B cell (primary cell): ENCODE measurements at regions of chr1 and their contacts with region 1.

Region 1: DNA sequence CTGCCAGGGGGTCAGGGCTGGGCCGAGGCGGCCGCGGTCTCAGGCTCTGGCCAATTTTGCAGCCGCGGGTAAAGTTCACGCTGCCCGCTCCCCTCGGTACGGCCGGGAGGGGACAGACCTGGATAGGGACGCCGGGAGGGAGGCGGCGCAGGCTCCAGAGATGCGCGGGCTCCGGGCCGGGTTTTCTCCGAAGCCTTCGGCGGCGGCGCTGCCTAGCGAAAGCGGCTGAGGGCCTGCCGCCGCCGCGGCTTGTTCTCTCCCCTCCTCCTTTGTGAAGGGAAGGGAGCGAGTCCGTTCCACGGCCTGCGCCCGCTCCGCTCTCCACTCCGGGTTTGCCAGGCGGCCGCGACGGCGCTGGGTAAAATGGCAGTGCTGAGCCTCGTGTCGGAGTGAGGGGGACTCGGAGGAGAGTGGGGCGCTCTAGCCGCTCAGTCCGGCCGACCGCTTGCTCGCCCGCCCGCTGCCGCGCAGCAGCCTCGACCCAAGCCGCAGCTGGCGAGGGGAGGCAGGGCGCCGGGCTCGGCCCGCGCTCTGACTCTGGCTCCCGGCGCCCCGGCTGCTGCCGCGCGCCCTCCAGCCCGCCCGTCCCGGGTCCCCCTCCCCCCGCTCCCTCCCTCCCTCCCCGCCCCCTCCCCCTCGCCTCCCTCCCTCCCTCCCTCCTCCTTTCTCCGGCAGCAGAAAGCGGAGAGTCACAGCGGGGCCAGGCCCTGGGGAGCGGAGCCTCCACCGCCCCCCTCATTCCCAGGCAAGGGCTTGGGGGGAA is at the start of gene ARID1A:
- DNase-seq: peak; percentile 99
- ATAC-seq: peak; percentile 62
- H3K4me3 ChIP-seq: peak within 1 kb of the TSS; percentile 22 to 84 (median 73)
- H3K4me3 Mint-ChIP-seq: peak within 1 kb of the TSS; percentile 91
- H3K27ac ChIP-seq: peak within 1 kb of the TSS; percentile 67 to 93
- H3K27ac Mint-ChIP-seq: peak within 1 kb of the TSS; percentile 93
- H3K4me1 ChIP-seq: peaks cover 46 to 48% of the 10 kb centered on the region in 2 donors
- H3K4me1 Mint-ChIP-seq: peaks cover 30% of the 10 kb centered on the region
- H3K27me3 ChIP-seq: no peaks in the 10 kb centered on the region
- H3K27me3 Mint-ChIP-seq: no peaks in the 10 kb centered on the region
- CTCF ChIP-seq: no peak
- total RNA-seq, gene ARID1A: 150 and 152 TPM in 2 replicates

Region 2: DNA sequence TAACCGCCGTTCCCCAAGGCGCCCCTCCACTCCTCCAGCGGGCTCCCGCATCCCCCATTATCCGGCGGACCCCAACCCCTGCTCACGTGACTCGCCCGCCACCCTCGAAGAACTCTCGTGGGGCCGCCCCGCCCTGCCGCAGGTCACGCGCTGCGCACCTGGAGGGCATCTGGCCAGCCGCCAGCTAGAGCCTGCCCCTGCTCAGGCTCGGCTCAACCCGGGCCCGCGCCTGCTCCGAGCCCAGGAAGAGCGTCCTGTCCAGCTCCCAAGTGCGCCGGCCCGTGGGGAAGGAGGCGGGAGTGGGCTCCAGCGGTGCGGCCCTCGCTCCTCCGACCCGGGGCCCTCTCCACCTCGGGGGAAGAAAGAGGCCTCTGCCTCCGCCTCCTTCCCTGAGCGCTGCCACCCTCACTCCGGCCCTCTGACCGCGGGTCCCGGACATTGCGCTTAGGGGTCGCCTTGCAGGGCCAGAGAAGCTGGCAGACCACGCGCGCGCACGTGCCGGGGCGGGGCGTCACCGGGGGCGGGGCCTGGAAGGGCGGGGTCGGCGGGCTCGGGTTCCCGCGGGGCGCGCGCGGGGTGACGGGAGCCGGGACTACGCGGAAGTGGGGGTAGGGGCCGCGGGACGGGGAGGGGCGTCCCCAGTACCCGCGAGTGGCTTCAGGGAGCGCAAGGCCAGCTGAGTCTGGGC is 194.9 kb before region 1 on chr1:
- CTCF ChIA-PET with region 1: no interaction called
- POLR2A ChIA-PET with region 1: interaction called, 10 read pairs
- intact Hi-C with region 1: loop called (anchors 10 kb)
- DNase-seq: peak; percentile 96
- ATAC-seq: peak; percentile 75
- H3K4me3 ChIP-seq: peak overlapping the region in 4 of 5 experiments; percentile 74 to 93 (median 88)
- H3K4me3 Mint-ChIP-seq: peak overlapping the region; percentile 91
- H3K27ac ChIP-seq: peak overlapping the region; percentile 100
- H3K27ac Mint-ChIP-seq: peak overlapping the region; percentile 98
- H3K4me1 ChIP-seq: peaks cover 7 to 19% of the 10 kb centered on the region in 2 donors
- H3K4me1 Mint-ChIP-seq: peaks cover 8% of the 10 kb centered on the region
- H3K27me3 ChIP-seq: no peaks in the 10 kb centered on the region
- H3K27me3 Mint-ChIP-seq: no peaks in the 10 kb centered on the region
- CTCF ChIP-seq: peak; percentile 44

Region 3: DNA sequence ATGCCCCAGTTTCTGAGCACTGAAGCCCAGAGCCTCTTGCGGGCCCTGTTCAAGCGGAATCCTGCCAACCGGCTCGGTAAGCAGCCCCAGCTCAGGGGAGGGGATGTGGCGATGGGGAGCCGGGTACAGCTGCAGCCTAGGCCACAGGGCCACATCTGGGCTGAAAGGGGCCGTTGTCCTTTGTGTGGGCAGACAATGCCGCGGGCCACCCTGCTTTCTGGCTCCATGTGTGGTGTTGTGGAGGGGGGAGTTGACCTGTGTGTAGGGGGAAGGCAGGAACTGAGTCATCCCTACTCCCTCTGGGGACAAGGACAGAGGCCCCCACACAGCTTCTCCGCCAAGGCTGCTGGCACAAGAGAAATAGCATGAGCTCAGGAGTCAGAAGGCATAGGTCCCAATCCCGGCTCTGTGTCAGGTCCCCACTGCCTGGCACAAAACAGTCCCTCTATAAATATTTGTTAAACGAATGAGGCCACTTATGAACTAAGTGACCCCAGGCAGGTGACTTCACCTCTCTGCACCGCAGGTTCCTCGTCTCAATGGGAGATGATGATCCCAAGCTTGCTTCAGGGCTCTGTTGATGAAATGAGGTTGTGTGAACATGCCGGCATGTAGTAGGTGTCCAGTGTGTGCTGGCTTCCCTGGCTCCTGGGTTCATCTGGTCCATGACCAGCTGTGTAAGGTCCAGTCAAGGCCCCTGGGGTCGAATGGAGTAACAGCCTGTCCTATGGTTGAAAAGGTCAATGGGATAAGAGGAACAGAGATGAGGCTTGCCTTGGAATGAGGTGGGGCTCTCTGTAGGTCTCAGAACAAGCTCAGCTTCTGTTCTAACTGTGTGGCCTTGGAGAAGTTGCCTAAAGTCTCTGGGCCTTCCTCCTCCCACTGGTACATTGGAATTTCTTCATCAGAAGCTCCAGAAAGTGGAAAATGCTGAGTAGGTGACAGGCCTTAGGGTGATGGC is 139.7 kb before region 1 on chr1:
- CTCF ChIA-PET with region 1: no interaction called
- POLR2A ChIA-PET with region 1: no interaction called
- intact Hi-C with region 1: no loop called
- DNase-seq: no peak
- ATAC-seq: no peak
- H3K4me3 ChIP-seq: no peak overlapping the region
- H3K4me3 Mint-ChIP-seq: no peak overlapping the region
- H3K27ac ChIP-seq: no peak overlapping the region
- H3K27ac Mint-ChIP-seq: no peak overlapping the region
- H3K4me1 ChIP-seq: no peaks in the 10 kb centered on the region
- H3K4me1 Mint-ChIP-seq: no peaks in the 10 kb centered on the region
- H3K27me3 ChIP-seq: no peaks in the 10 kb centered on the region
- H3K27me3 Mint-ChIP-seq: no peaks in the 10 kb centered on the region
- CTCF ChIP-seq: no peak

Region 4: DNA sequence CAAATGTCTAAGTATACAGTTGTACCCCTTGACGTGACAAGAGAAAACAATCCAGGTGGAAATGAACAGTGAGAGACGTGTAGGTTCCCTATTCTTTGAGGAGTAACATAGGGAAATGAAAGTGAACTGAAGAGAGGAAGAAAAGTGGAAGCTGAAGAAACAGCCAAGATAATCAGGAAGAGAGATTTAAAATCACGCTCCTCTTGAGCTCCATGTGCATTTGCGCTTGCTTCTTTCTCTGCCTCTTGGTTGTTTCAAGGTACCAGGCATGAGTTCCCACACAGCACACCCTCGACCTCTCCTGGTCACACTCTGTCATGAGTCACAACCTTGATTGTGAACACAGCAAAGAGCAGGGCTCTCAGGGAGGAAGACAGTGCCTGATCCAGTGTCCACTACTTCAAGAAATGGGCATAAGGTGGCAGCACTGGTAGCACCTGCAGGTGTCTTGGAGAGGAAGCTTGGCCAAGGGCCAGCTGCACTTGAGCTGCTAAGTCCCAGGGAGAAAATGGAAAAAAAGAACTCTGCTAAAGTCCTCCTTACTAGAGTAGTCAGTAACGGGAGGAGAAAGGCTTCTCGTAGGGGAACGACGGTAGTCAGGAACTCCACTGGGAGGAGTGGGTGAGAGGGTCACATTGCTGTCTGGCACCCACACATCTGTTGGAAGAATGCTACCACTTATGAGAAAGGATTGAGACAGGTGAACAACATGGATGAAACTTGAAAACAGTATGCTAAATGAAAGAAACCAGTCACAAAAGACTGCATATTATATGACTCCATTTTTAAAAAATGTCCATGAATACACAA is 18.0 kb before region 1 on chr1:
- CTCF ChIA-PET with region 1: interaction called, 93 read pairs
- POLR2A ChIA-PET with region 1: interaction called, 14 read pairs
- intact Hi-C with region 1: loop called (anchors 1 kb)
- DNase-seq: peak; percentile 76
- ATAC-seq: peak; percentile 96
- H3K4me3 ChIP-seq: peak overlapping the region in 4 of 5 experiments; percentile 13 to 31 (median 24)
- H3K4me3 Mint-ChIP-seq: peak overlapping the region; percentile 77
- H3K27ac ChIP-seq: peak overlapping the region in 1 of 2 donors; percentile 12
- H3K27ac Mint-ChIP-seq: peak overlapping the region; percentile 83
- H3K4me1 ChIP-seq: peaks cover 14 to 15% of the 10 kb centered on the region in 2 donors
- H3K4me1 Mint-ChIP-seq: peaks cover 15% of the 10 kb centered on the region
- H3K27me3 ChIP-seq: no peaks in the 10 kb centered on the region
- H3K27me3 Mint-ChIP-seq: no peaks in the 10 kb centered on the region
- CTCF ChIP-seq: peak; percentile 45

Region 5: DNA sequence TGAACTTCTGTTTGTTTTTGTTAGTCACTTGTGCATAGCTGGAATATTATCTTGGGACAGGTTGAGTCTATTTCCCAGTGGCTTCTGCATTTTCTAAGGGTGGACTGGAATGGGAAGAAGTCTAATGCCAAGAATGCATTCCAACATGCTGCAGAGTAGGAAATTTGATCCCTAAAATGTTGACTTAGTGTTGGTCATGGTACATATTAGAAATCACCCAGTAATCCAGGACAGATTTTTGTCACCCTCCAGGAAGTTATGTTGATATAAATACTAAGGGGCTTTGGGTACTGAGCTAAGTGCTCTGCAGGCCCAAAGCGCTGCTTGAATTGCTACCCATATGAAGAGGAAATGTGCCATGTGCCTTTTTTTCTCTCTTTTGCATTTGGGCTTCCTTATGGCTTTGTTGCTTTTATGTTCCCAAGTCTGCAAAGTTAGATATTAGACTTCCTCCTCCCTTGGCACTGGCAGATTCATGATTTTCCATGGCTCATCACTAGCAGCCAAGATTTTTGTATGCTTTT is 10.3 kb after region 1 on chr1:
- CTCF ChIA-PET with region 1: interaction called, 9 read pairs
- POLR2A ChIA-PET with region 1: interaction called, 5 read pairs
- intact Hi-C with region 1: loop called (anchors 1 kb)
- DNase-seq: peak; percentile 29
- ATAC-seq: peak; percentile 22
- H3K4me3 ChIP-seq: peak overlapping the region in 1 of 5 experiments; percentile 42
- H3K4me3 Mint-ChIP-seq: peak overlapping the region; percentile 71
- H3K27ac ChIP-seq: peak overlapping the region in 1 of 2 donors; percentile 46
- H3K27ac Mint-ChIP-seq: peak overlapping the region; percentile 82
- H3K4me1 ChIP-seq: peaks cover 69 to 70% of the 10 kb centered on the region in 2 donors
- H3K4me1 Mint-ChIP-seq: peaks cover 37% of the 10 kb centered on the region
- H3K27me3 ChIP-seq: no peaks in the 10 kb centered on the region
- H3K27me3 Mint-ChIP-seq: no peaks in the 10 kb centered on the region
- CTCF ChIP-seq: no peak

Region 6: GRCh38 chr1:26744075-26744959 is 48.8 kb after region 1 on chr1:
- CTCF ChIA-PET with region 1: interaction called, 15 read pairs
- POLR2A ChIA-PET with region 1: interaction called, 26 read pairs
- intact Hi-C with region 1: loop called (anchors 1 kb)
- DNase-seq: peak; percentile 88
- ATAC-seq: peak; percentile 95
- H3K4me3 ChIP-seq: peak overlapping the region; percentile 7 to 51 (median 39)
- H3K4me3 Mint-ChIP-seq: peak overlapping the region; percentile 80
- H3K27ac ChIP-seq: peak overlapping the region; percentile 75 to 96
- H3K27ac Mint-ChIP-seq: peak overlapping the region; percentile 92
- H3K4me1 ChIP-seq: peaks cover 82 to 88% of the 10 kb centered on the region in 2 donors
- H3K4me1 Mint-ChIP-seq: peaks cover 83% of the 10 kb centered on the region
- H3K27me3 ChIP-seq: no peaks in the 10 kb centered on the region
- H3K27me3 Mint-ChIP-seq: no peaks in the 10 kb centered on the region
- CTCF ChIP-seq: no peak